ENCODE measurements at regions of chr20 and their contacts with region 1.

Region 1: GRCh38 chr20:3679749-3680700 is 1.8 kb downstream of the ADAM33 start:
- DNase-seq: no peak
- H3K4me3 Mint-ChIP-seq: no peak overlapping the region
- H3K27ac Mint-ChIP-seq: no peak overlapping the region
- H3K4me1 Mint-ChIP-seq: peaks cover 5% of the 10 kb centered on the region
- H3K27me3 Mint-ChIP-seq: peaks cover 58% of the 10 kb centered on the region

Region 2: GRCh38 chr20:3635346-3635745 is 44.7 kb before region 1 on chr20:
- intact Hi-C with region 1: no loop called
- DNase-seq: no peak
- H3K4me3 Mint-ChIP-seq: no peak overlapping the region
- H3K27ac Mint-ChIP-seq: no peak overlapping the region
- H3K4me1 Mint-ChIP-seq: no peaks in the 10 kb centered on the region
- H3K27me3 Mint-ChIP-seq: no peaks in the 10 kb centered on the region

Region 3: DNA sequence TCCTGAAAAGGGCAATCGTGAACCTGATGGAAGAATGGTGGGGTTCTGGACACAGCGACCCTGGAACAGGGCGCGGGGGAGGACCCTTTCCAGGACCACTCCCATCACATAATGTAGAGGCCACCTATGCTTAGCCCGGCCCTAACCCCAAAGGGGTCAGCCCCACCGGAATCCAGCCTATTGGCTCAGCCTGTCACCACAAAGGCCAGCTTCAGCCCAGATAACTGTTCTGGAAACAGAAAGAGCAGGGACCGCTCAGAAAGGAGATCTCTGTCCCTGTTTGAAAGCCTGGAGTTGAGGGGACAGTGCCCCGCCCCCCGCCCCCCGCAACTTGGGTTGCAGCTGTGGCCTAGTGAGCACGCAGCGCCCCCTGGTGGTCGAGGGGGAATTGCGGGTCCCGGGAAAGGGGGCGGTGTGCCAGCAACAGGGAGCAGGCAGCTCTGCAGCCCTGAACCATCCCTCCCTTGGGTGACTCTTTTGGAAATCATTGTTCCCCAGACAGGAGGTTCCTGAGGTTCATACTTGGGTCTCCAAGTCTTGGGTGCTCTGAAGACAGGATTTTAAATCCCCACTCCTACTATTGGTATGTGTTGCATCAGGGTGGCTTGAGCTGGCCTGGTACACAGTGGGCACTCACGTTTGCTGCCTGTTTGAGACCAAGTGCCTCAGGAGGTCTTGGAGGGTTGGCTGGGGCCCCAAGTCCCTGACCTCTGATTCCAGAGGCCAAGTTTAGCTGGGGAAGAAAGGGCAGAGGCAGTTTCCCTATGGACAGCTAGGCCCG is 30.9 kb after region 1 on chr20:
- intact Hi-C with region 1: loop called (anchors 1 kb)
- DNase-seq: peak; percentile 50
- H3K4me3 Mint-ChIP-seq: no peak overlapping the region
- H3K27ac Mint-ChIP-seq: no peak overlapping the region
- H3K4me1 Mint-ChIP-seq: no peaks in the 10 kb centered on the region
- H3K27me3 Mint-ChIP-seq: peaks cover 10% of the 10 kb centered on the region

Region 4: DNA sequence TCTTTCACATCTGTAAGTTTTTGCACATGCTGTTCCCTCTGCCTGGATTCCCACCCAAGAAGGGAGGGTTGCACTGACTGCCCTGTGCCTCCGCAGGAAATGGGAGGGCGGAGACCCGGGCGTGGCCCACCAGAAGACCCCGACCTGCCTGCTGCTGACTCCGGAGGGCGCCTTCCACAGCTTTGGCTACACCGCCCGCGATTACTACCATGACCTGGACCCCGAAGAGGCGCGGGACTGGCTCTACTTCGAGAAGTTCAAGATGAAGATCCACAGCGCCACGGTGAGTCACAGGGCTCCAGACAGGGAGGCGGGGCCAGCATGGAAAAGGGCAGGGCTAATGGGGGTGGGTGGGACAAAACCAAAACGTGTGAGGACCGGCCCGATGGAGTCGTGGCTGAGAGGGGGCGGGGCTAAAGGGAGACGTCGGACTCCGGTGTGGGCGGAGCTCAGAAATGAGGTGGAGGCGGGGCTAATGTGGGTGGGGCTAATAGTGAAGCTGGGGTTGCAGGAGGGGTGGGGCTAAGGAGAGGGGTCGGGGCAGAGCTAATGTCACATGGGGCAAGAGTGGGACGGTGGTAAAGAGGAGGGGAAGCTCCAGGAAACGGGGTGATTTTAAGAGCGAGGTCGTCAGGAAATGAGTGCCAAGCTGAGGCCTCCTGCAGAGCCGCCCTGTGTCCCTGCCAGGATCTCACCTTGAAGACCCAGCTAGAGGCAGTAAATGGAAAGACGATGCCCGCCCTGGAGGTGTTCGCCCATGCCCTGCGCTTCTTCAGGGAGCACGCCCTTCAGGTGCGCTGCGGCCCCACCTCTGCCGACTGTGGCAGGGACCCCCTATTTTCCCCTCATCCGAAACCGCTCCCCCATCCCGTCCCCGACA is 65.0 kb after region 1 on chr20:
- intact Hi-C with region 1: loop called (anchors 5 kb)
- DNase-seq: peak; percentile 59
- H3K4me3 Mint-ChIP-seq: peak overlapping the region; percentile 63
- H3K27ac Mint-ChIP-seq: no peak overlapping the region
- H3K4me1 Mint-ChIP-seq: peaks cover 13% of the 10 kb centered on the region
- H3K27me3 Mint-ChIP-seq: peaks cover 15% of the 10 kb centered on the region

Region 5: GRCh38 chr20:3854462-3854871 is 174.4 kb after region 1 on chr20:
- intact Hi-C with region 1: loop called (anchors 1 kb)
- DNase-seq: no peak
- H3K4me3 Mint-ChIP-seq: no peak overlapping the region
- H3K27ac Mint-ChIP-seq: peak overlapping the region; percentile 18
- H3K4me1 Mint-ChIP-seq: peaks cover 12% of the 10 kb centered on the region
- H3K27me3 Mint-ChIP-seq: no peaks in the 10 kb centered on the region

Region 6: GRCh38 chr20:4091490-4092479 is 411.8 kb after region 1 on chr20:
- intact Hi-C with region 1: loop called (anchors 5 kb)
- DNase-seq: peak; percentile 34
- H3K4me3 Mint-ChIP-seq: no peak overlapping the region
- H3K27ac Mint-ChIP-seq: no peak overlapping the region
- H3K4me1 Mint-ChIP-seq: peaks cover 10% of the 10 kb centered on the region
- H3K27me3 Mint-ChIP-seq: peaks cover 14% of the 10 kb centered on the region

Measured in activated T-helper 1 cell treated with anti-CD3 and anti-CD28 coated beads, Interleukin-12 subunit alpha, Interleukin-12 subunit beta, Interleukin-2, Interleukin-4 antibody, amounts not matched to agents 30 ng/mL and 10 ng/mL and 1 ng/mL, durations not matched to agents 14 hours and 24 hours and 36 hours (primary cell).